ENCODE measurements at regions of chr17 and their contacts with region 1.

Region 1: GRCh38 chr17:19977311-19978208 is at the start of gene AKAP10:
- DNase-seq: peak; percentile 98
- H3K4me3 Mint-ChIP-seq: peak within 1 kb of the TSS; percentile 94
- H3K27ac Mint-ChIP-seq: peak within 1 kb of the TSS; percentile 98
- H3K4me1 Mint-ChIP-seq: peaks cover 34% of the 10 kb centered on the region
- H3K27me3 Mint-ChIP-seq: no peaks in the 10 kb centered on the region
- total RNA-seq, gene AKAP10: 38.4 and 42.2 TPM in 2 replicates

Region 2: DNA sequence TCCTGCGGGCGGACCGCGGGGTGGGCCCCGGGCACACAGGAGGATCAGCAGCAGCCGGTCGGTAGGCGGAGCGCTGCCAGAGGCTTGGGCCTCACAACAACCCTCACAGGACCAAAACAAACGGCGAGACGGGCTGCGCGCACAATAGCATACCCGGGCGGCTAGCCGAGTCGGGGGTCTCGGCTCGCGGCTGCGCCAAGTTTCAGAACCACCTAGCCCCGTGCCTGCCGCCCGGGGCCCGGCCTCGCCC is 110.6 kb before region 1 on chr17:
- intact Hi-C with region 1: loop called (anchors 5 kb)
- DNase-seq: no peak
- H3K4me3 Mint-ChIP-seq: peak overlapping the region; percentile 86
- H3K27ac Mint-ChIP-seq: peak overlapping the region; percentile 75
- H3K4me1 Mint-ChIP-seq: peaks cover 9% of the 10 kb centered on the region
- H3K27me3 Mint-ChIP-seq: no peaks in the 10 kb centered on the region

Region 3: DNA sequence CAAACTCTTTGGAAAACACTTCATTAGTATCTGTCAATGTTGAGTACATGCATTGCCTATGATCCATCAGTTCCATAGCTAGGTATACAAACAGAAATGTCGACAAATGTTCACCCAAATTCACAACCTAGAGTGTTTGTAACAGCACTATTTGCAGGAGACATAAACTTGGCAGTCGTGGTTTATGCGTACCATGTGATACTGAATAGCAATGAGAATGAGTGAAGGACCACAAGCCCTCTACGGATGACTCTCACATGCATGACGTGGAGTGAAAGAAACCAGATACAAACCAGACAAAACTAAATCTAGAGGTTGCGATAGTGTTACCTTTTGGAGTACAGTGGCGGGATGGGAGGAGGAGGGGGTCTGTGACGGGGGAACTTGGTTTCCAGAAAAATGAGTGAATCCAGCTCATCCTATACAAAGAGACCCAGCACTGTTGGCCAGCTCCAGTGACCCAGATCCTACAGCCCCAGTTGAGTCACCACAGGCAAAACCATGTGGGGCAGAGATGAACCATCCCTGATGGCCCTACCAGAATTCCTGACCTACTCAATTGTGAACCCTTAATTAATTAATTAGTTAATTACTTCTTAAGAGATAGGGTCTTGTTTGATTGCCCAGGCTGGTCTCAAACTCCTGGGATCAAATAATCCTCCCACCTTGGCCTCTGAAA is 93.9 kb before region 1 on chr17:
- intact Hi-C with region 1: no loop called
- DNase-seq: no peak
- H3K4me3 Mint-ChIP-seq: no peak overlapping the region
- H3K27ac Mint-ChIP-seq: no peak overlapping the region
- H3K4me1 Mint-ChIP-seq: no peaks in the 10 kb centered on the region
- H3K27me3 Mint-ChIP-seq: peaks cover 3% of the 10 kb centered on the region

Region 4: GRCh38 chr17:20009302-20010098 is 31.9 kb after region 1 on chr17 and contains the start of gene SPECC1:
- intact Hi-C with region 1: loop called (anchors 1 kb)
- DNase-seq: peak; percentile 97
- H3K4me3 Mint-ChIP-seq: peak within 1 kb of the TSS; percentile 91
- H3K27ac Mint-ChIP-seq: peak within 1 kb of the TSS; percentile 76
- H3K4me1 Mint-ChIP-seq: peaks cover 9% of the 10 kb centered on the region
- H3K27me3 Mint-ChIP-seq: peaks cover 62% of the 10 kb centered on the region
- total RNA-seq, gene SPECC1: 6.0 and 6.4 TPM in 2 replicates

Region 5: DNA sequence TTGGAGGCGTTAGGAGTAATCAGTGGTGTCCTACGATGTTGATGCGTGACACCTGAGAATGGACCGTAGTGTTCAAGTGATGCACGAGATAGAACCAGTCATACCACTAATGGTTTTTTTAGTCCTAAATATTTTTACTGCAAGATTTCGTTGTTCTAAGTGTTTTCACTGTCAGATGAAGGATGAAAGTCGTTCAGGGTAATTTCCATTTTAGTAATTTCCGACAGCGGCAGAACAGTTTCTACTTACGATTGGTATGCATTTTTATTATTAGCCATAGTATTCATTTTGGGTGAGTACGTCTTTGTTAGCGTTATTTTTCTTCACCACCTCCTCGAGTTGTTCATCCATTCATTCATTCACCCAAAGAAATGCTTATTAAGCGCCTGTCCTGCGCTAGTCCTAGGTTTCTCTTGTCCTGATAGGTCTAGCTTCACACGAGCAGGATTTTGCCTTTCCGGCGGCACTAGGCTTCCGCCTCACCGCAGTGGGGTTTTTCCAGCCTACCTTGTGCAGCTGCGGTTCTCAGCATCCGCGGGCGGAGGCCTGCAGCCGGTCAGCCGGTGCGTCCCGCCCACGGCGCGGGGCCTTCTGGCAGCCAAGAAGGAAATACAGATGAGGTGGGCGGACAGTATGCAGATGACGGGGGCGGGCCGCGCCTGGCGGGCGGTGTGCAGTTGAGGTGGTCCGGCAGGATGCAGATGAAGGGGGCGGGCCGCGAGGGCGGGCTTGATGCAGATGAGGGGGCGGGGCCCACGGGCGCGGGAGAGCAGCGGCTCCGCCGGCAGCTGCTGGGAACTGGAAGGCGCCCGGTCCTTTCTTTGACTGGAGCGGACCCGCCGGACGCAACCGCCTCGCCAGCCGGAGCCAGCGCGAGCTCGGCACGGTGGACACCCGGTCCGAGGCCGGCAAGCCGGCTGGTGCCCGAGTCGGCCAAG is 178.0 kb after region 1 on chr17:
- intact Hi-C with region 1: loop called (anchors 1 kb)
- DNase-seq: peak; percentile 99
- H3K4me3 Mint-ChIP-seq: no peak overlapping the region
- H3K27ac Mint-ChIP-seq: peak overlapping the region; percentile 88
- H3K4me1 Mint-ChIP-seq: peaks cover 8% of the 10 kb centered on the region
- H3K27me3 Mint-ChIP-seq: peaks cover 21% of the 10 kb centered on the region